WTC11 (cell line): ENCODE measurements at regions of chr22 and their contacts with region 1.

Region 1: GRCh38 chr22:43346521-43346929 is 3.4 kb upstream of the SCUBE1 start:
- DNase-seq: peak; percentile 87
- ATAC-seq: peak; percentile 80
- H3K4me3 Mint-ChIP-seq: no peak overlapping the region
- H3K27ac Mint-ChIP-seq: no peak overlapping the region
- H3K4me1 Mint-ChIP-seq: peaks cover 31% of the 10 kb centered on the region
- H3K27me3 Mint-ChIP-seq: peaks cover 43% of the 10 kb centered on the region
- CTCF ChIP-seq: peak; percentile 57; the same call in 1 of the 2 replicates

Region 2: GRCh38 chr22:43187171-43188099 is 159.1 kb before region 1 on chr22:
- CTCF ChIA-PET with region 1: interaction called, 13 read pairs
- POLR2A ChIA-PET with region 1: no interaction called
- DNase-seq: peak; percentile 95
- ATAC-seq: peak; percentile 86
- H3K4me3 Mint-ChIP-seq: peak overlapping the region; percentile 65
- H3K27ac Mint-ChIP-seq: peak overlapping the region; percentile 74
- H3K4me1 Mint-ChIP-seq: peaks cover 24% of the 10 kb centered on the region
- H3K27me3 Mint-ChIP-seq: peaks cover 22% of the 10 kb centered on the region
- CTCF ChIP-seq: peak; percentile 69

Region 3: DNA sequence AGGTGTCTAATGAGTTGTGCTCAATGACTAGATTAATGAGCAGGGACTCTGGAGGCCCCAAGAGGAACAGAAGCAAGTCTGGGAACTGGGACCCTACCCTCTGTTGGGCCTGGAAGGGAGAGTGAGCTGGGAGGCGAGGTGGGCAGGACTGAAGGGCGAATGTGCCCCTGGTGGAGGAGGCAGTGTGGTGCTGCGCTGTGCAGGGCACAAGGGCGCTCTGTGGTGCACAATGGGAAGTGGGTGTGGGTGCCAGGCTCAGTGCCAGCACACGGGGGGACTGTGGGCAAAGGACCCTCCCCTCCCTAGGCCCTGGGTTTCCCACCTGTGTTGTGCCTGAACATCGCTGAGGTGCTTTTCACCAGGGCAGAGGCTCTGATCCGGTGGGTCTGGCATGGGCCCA is 102.1 kb before region 1 on chr22:
- CTCF ChIA-PET with region 1: interaction called, 13 read pairs
- POLR2A ChIA-PET with region 1: no interaction called
- DNase-seq: no peak
- ATAC-seq: no peak
- H3K4me3 Mint-ChIP-seq: no peak overlapping the region
- H3K27ac Mint-ChIP-seq: no peak overlapping the region
- H3K4me1 Mint-ChIP-seq: 0 out of 2 replicates have a peak, but pooled peaks cover 2% of the 10 kb centered on the region
- H3K27me3 Mint-ChIP-seq: no peaks in the 10 kb centered on the region
- CTCF ChIP-seq: no peak

Region 4: GRCh38 chr22:43293655-43294392 is 52.7 kb before region 1 on chr22:
- CTCF ChIA-PET with region 1: interaction called, 41 read pairs
- POLR2A ChIA-PET with region 1: no interaction called
- DNase-seq: no peak
- ATAC-seq: no peak; the same call in 1 of the 2 replicates
- H3K4me3 Mint-ChIP-seq: no peak overlapping the region
- H3K27ac Mint-ChIP-seq: no peak overlapping the region
- H3K4me1 Mint-ChIP-seq: 0 out of 2 replicates have a peak, but pooled peaks cover 2% of the 10 kb centered on the region
- H3K27me3 Mint-ChIP-seq: no peaks in the 10 kb centered on the region
- CTCF ChIP-seq: no peak

Region 5: DNA sequence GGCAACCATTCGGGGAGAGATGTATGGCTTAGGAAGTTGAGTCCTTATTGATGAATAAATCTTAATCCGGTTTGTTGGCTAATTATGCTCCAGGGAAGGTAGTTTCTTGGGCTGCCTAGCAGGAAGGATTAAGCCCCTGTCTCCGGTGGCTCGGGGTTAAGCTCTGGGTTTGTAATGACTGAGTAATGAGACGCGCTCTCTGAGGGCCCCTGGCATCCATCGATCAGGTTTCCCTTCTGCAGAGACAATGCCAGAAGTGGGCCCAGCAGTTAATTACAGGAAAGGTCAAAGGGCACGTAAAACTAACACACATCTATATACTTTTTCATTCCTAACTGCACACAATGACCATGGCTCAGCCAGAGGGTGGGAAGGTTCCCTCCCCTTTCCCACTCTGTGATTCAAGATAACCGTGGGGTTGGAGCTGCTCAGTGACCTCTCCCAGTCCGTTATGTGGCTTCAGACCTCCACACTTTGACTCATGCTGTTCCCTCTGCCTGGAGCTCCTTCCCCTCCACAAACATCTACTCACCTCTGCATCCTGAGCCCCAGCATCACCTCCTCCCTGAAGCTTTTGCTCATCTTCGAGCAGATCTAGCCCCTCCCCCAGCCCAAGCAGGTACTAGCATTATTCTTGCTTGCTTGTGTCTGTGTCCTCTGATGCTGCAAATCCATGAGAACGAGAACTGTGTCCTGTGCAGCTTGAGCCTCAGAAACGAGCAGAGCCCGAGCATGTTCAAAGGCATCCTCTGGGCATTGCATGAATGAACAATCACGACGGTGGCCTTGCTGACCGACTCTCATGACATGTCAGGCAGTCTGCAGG is 20.0 kb before region 1 on chr22:
- CTCF ChIA-PET with region 1: interaction called, 28 read pairs
- POLR2A ChIA-PET with region 1: no interaction called
- DNase-seq: no peak
- ATAC-seq: no peak; the same call in 1 of the 2 replicates
- H3K4me3 Mint-ChIP-seq: no peak overlapping the region
- H3K27ac Mint-ChIP-seq: no peak overlapping the region
- H3K4me1 Mint-ChIP-seq: peaks cover 33% of the 10 kb centered on the region
- H3K27me3 Mint-ChIP-seq: no peaks in the 10 kb centered on the region; the same call in 1 of the 2 replicates
- CTCF ChIP-seq: no peak

Region 6: GRCh38 chr22:43370036-43370435 is 23.5 kb after region 1 on chr22:
- CTCF ChIA-PET with region 1: interaction called, 18 read pairs
- POLR2A ChIA-PET with region 1: no interaction called
- DNase-seq: peak; percentile 62
- ATAC-seq: peak; percentile 96
- H3K4me3 Mint-ChIP-seq: peak overlapping the region; percentile 24; the same call in 1 of the 2 replicates
- H3K27ac Mint-ChIP-seq: no peak overlapping the region
- H3K4me1 Mint-ChIP-seq: peaks cover 12% of the 10 kb centered on the region
- H3K27me3 Mint-ChIP-seq: peaks cover 3% of the 10 kb centered on the region; the same call in 1 of the 2 replicates
- CTCF ChIP-seq: no peak

Region 7: GRCh38 chr22:43397766-43398165 is 51.2 kb after region 1 on chr22:
- CTCF ChIA-PET with region 1: no interaction called
- POLR2A ChIA-PET with region 1: no interaction called
- DNase-seq: no peak
- ATAC-seq: no peak
- H3K4me3 Mint-ChIP-seq: no peak overlapping the region
- H3K27ac Mint-ChIP-seq: no peak overlapping the region
- H3K4me1 Mint-ChIP-seq: peaks cover 2% of the 10 kb centered on the region; the same call in 1 of the 2 replicates
- H3K27me3 Mint-ChIP-seq: no peaks in the 10 kb centered on the region; the same call in 1 of the 2 replicates
- CTCF ChIP-seq: no peak